MCF 10A (cell line): ENCODE measurements at regions of chr4 and their contacts with region 1.

Region 1: GRCh38 chr4:41214136-41214824 is at the start of gene APBB2:
- DNase-seq: peak; percentile 97
- H3K4me3 Mint-ChIP-seq: peak within 1 kb of the TSS; percentile 98
- H3K27ac Mint-ChIP-seq: peak within 1 kb of the TSS; percentile 97
- H3K4me1 Mint-ChIP-seq: peaks cover 12% of the 10 kb centered on the region
- H3K27me3 Mint-ChIP-seq: no peaks in the 10 kb centered on the region
- CTCF ChIP-seq: peak; percentile 86
- total RNA-seq, gene APBB2: 159 and 201 TPM in 2 replicates

Region 2: GRCh38 chr4:40736910-40737309 is 477.4 kb before region 1 on chr4:
- CTCF ChIA-PET with region 1: interaction called, 5 read pairs
- POLR2A ChIA-PET with region 1: no interaction called
- intact Hi-C with region 1: loop called (anchors 5 kb)
- DNase-seq: peak; percentile 52
- H3K4me3 Mint-ChIP-seq: no peak overlapping the region
- H3K27ac Mint-ChIP-seq: no peak overlapping the region
- H3K4me1 Mint-ChIP-seq: peaks cover 6% of the 10 kb centered on the region
- H3K27me3 Mint-ChIP-seq: no peaks in the 10 kb centered on the region
- CTCF ChIP-seq: peak; percentile 39

Region 3: DNA sequence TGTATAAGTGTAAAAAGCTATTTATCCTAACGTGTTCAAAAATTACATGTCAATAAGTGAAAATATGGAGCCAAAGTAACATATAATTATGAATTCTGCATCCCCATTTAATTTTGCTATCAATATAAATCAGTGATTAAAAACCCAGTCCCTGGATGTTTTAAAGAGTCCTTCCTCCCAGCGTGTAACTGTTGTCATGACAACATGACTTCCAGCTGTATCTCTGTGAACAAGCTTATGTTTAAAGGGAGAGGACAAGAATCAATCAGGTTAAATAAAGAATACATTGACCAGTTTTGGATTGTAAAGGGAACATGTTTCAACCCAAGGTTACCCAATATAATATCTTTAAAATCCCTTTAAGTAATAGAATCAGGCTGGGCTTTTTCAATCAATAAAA is 244.8 kb before region 1 on chr4:
- CTCF ChIA-PET with region 1: interaction called, 13 read pairs
- POLR2A ChIA-PET with region 1: interaction called, 6 read pairs
- intact Hi-C with region 1: no loop called
- DNase-seq: no peak
- H3K4me3 Mint-ChIP-seq: no peak overlapping the region
- H3K27ac Mint-ChIP-seq: no peak overlapping the region
- H3K4me1 Mint-ChIP-seq: peaks cover 9% of the 10 kb centered on the region
- H3K27me3 Mint-ChIP-seq: no peaks in the 10 kb centered on the region
- CTCF ChIP-seq: no peak

Region 4: GRCh38 chr4:41050866-41051775 is 163.2 kb before region 1 on chr4:
- CTCF ChIA-PET with region 1: interaction called, 3 read pairs
- POLR2A ChIA-PET with region 1: interaction called, 3 read pairs
- intact Hi-C with region 1: loop called (anchors 5 kb)
- DNase-seq: no peak
- H3K4me3 Mint-ChIP-seq: no peak overlapping the region
- H3K27ac Mint-ChIP-seq: peak overlapping the region; percentile 58
- H3K4me1 Mint-ChIP-seq: peaks cover 28% of the 10 kb centered on the region
- H3K27me3 Mint-ChIP-seq: no peaks in the 10 kb centered on the region
- CTCF ChIP-seq: no peak

Region 5: GRCh38 chr4:41143311-41144039 is 70.8 kb before region 1 on chr4:
- CTCF ChIA-PET with region 1: interaction called, 7 read pairs
- POLR2A ChIA-PET with region 1: interaction called, 58 read pairs
- intact Hi-C with region 1: no loop called
- DNase-seq: peak; percentile 90
- H3K4me3 Mint-ChIP-seq: peak overlapping the region; percentile 56
- H3K27ac Mint-ChIP-seq: peak overlapping the region; percentile 93
- H3K4me1 Mint-ChIP-seq: peaks cover 56% of the 10 kb centered on the region
- H3K27me3 Mint-ChIP-seq: no peaks in the 10 kb centered on the region
- CTCF ChIP-seq: no peak

Region 6: DNA sequence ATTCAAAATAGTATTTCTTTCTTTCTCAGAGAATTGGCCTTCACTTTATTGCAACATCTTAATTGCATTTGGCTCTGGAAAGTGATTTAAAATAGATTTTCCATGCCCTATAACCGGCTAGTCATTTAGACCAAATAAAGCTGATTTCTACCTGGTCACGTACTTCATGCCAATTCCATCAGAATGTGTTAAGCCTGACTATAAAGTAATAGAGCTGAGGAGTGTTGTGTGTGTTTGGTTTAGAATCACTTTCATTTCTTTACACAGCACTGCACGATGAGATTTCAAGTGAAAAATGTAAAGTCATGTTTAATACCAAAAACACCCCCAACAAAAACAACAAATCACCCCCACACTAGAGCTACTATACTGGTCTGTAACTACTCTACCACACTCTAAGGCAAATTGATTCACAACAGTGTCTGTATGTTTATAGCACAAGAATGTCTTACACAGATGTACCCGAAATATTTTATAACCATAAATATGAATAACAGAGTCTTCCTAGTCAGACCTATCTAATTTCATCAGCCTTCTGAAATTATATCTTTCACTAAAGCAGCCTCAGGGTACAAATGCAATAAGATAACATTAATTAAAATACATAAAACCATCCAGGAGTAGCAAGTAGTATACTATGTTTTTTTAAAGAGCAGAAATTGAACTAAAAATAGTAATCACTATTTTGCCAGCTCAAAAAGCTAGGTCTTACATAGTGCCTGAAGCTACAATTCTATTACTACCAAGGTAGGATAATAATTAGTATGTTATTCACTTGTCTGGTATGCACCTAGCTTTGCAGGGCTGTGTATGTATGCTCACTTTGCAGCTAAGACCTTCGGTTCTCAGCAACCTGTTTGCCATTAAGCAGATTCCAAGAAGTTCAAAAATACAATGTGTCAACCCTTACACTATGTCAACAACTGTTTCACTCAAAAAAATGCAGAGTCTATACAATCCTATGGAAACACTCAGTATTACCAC is 28.4 kb before region 1 on chr4:
- CTCF ChIA-PET with region 1: interaction called, 9 read pairs
- POLR2A ChIA-PET with region 1: interaction called, 42 read pairs
- intact Hi-C with region 1: no loop called
- DNase-seq: peak; percentile 46
- H3K4me3 Mint-ChIP-seq: peak overlapping the region; percentile 49
- H3K27ac Mint-ChIP-seq: peak overlapping the region; percentile 76
- H3K4me1 Mint-ChIP-seq: peaks cover 64% of the 10 kb centered on the region
- H3K27me3 Mint-ChIP-seq: no peaks in the 10 kb centered on the region
- CTCF ChIP-seq: no peak

Region 7: DNA sequence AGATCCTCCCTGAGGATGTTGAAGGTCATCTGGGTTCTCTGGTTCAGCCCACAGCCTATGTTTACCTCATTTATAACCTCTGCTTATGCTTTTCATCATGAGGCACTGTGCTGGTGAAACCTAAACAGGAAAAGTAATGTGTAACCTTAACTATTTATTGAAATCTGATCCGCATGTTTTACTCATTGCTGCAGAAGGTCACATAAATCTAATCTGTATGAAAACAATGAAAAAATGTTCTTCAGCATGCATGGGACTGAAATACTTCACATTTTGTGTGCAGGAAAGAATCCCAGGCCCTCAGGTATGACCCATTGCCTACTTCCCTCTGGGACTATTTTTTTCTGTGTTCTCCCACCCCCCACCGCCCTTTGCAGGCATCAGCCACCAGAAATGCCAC is 72.8 kb after region 1 on chr4:
- CTCF ChIA-PET with region 1: no interaction called
- POLR2A ChIA-PET with region 1: no interaction called
- intact Hi-C with region 1: no loop called
- DNase-seq: peak; percentile 33
- H3K4me3 Mint-ChIP-seq: no peak overlapping the region
- H3K27ac Mint-ChIP-seq: no peak overlapping the region
- H3K4me1 Mint-ChIP-seq: no peaks in the 10 kb centered on the region
- H3K27me3 Mint-ChIP-seq: no peaks in the 10 kb centered on the region
- CTCF ChIP-seq: no peak